Activated naive CD4-positive, alpha-beta T cell treated with anti-CD3 and anti-CD28 coated beads for 36 hours (primary cell): ENCODE measurements at regions of chr17 and their contacts with region 1.

Region 1: GRCh38 chr17:78781948-78782916 is at the start of gene CYTH1:
- DNase-seq: peak; percentile 96
- H3K4me3 Mint-ChIP-seq: peak within 1 kb of the TSS; percentile 82
- H3K27ac Mint-ChIP-seq: peak within 1 kb of the TSS; percentile 97
- H3K4me1 Mint-ChIP-seq: peaks cover 50% of the 10 kb centered on the region
- H3K27me3 Mint-ChIP-seq: no peaks in the 10 kb centered on the region
- total RNA-seq, gene CYTH1: 145 to 149 TPM

Region 2: DNA sequence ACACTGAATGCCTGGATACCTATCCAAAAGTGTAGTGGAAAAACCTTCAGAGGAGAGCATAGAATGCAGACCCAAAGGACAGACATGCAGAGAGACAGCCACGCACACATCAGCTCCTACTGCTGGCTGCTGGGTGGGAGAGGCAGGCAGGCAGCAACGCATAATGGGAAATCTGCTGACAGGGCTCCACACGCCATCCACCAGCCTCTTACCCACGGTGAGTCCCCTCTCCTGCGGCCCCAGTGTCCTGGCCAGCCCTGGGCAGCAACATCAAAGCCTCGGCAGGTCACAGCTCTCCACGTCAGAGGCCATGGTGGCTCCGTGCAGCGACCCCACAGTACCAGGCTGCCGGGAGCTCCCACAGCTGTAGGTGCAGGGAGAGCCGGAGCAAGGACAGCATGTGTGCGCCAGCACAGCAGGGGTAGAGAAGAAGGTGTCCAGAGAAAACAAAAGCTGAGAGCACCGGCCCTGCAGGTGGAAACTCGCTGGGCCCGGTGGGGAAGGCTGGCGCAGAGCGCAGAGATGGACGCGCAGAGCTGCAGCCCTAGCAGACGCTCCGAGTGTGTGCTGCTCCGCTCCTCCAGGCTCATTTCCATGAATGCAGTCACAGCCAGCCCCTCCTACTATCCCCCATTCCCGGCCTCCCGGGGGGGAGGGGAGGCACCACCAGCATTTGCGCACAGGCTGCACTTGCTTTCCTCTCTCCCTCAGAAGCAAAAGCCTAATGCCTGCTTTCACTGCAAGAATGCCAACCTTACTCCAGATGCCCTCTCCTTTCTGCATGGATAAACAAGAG is 59.0 kb before region 1 on chr17:
- CTCF ChIA-PET with region 1: no interaction called
- intact Hi-C with region 1: loop called (anchors 2 kb)
- DNase-seq: no peak
- H3K4me3 Mint-ChIP-seq: no peak overlapping the region
- H3K27ac Mint-ChIP-seq: peak overlapping the region; percentile 92
- H3K4me1 Mint-ChIP-seq: peaks cover 97% of the 10 kb centered on the region
- H3K27me3 Mint-ChIP-seq: no peaks in the 10 kb centered on the region

Region 3: GRCh38 chr17:78759203-78759968 is 22.8 kb before region 1 on chr17:
- CTCF ChIA-PET with region 1: interaction called, 3 read pairs
- intact Hi-C with region 1: loop called (anchors 1 kb)
- DNase-seq: peak; percentile 86
- H3K4me3 Mint-ChIP-seq: peak overlapping the region; percentile 70
- H3K27ac Mint-ChIP-seq: peak overlapping the region; percentile 95
- H3K4me1 Mint-ChIP-seq: peaks cover 83% of the 10 kb centered on the region
- H3K27me3 Mint-ChIP-seq: no peaks in the 10 kb centered on the region

Region 4: GRCh38 chr17:78769196-78769773 is 12.9 kb before region 1 on chr17:
- CTCF ChIA-PET with region 1: interaction called, 7 read pairs
- intact Hi-C with region 1: loop called (anchors 1 kb)
- DNase-seq: peak; percentile 54
- H3K4me3 Mint-ChIP-seq: no peak overlapping the region
- H3K27ac Mint-ChIP-seq: no peak overlapping the region
- H3K4me1 Mint-ChIP-seq: peaks cover 42% of the 10 kb centered on the region
- H3K27me3 Mint-ChIP-seq: no peaks in the 10 kb centered on the region

Region 5: DNA sequence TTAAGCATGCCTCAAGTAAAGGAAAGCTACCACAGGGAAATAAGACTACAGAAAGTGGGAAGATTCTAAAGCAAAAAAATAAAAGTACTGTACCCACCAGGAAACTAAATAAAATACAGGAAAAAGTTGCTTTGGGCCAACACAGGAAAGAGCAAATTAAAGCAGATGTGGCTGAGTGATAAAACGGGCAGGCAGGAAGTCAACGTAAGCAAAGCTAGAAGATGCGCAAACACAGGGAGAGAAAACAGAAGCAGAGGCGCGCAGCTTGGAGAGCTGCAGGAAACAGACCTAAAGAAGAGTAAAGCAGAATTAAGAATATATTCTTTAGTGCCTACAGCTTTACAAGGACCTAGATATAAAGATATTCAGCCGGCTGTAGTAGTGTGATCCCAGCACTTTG is 36.7 kb after region 1 on chr17:
- CTCF ChIA-PET with region 1: no interaction called
- intact Hi-C with region 1: loop called (anchors 2 kb)
- DNase-seq: peak; percentile 66
- H3K4me3 Mint-ChIP-seq: peak overlapping the region; percentile 45
- H3K27ac Mint-ChIP-seq: peak overlapping the region; percentile 85
- H3K4me1 Mint-ChIP-seq: peaks cover 53% of the 10 kb centered on the region
- H3K27me3 Mint-ChIP-seq: no peaks in the 10 kb centered on the region

Region 6: DNA sequence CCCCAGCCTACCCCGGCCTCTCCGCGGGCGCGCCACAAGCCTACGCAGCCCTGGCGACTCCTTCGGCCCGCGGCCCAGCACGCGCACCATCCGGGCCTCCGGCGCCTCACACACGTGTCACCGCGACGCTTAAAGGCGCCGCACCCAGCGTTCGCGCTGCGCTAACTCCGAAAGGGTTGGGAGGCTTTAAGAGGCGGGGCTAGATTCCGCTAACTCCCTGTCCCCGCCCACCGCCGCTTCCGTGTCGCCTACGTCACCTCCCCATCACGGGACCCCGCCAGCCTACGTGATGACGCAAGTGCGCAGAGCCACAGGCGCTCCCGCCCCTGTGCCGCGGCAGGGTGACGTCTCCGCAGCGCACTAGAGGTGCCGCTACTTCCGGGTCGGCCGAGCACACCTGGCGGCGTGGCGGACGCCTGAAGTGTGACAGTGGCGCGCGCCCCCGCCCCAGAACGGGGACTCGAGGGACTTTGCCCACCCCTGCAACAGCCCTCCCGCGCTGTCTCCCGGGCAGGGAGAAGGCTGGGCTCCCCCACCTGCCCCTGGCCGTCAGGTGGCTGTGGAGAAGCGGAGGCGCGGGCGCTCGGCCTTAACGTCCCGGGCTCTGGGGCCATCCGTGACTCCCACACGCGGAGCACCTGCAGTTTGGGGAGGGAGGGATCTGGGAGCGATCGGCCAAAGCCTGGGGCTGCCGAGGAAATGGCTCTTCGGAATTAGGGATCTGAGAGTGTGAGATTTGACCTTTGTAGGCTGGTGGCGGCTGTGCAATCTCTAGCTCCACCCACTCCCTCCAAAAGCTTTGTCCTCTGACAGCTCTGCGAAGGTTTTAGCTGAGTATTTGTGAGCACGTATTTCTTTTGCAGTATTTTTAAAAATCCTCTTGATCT is 58.7 kb after region 1 on chr17 and contains the start of gene USP36:
- CTCF ChIA-PET with region 1: no interaction called
- intact Hi-C with region 1: loop called (anchors 2 kb)
- DNase-seq: peak; percentile 100
- H3K4me3 Mint-ChIP-seq: peak within 1 kb of the TSS; percentile 96
- H3K27ac Mint-ChIP-seq: peak within 1 kb of the TSS; percentile 93
- H3K4me1 Mint-ChIP-seq: peaks cover 44% of the 10 kb centered on the region
- H3K27me3 Mint-ChIP-seq: no peaks in the 10 kb centered on the region
- total RNA-seq, gene USP36: 65.3 to 68.7 TPM